PC-9 (cell line): ENCODE measurements at regions of chr12 and their contacts with region 1.

Region 1: GRCh38 chr12:49740930-49741881 is at the start of gene TMBIM6:
- DNase-seq: peak; percentile 98 to 99
- H3K4me3 ChIP-seq: peak within 1 kb of the TSS; percentile 96
- H3K27ac ChIP-seq: peak within 1 kb of the TSS; percentile 87
- H3K4me1 ChIP-seq: peaks cover 20% of the 10 kb centered on the region
- H3K27me3 ChIP-seq: no peaks in the 10 kb centered on the region
- CTCF ChIP-seq: peak; percentile 92
- total RNA-seq, gene TMBIM6: 685 and 690 TPM in 2 replicates

Region 2: GRCh38 chr12:49188914-49189367 is 552.3 kb before region 1 on chr12 and contains the start of gene TUBA1A:
- CTCF ChIA-PET with region 1: no interaction called
- POLR2A ChIA-PET with region 1: interaction called, 10 read pairs
- intact Hi-C with region 1: no loop called
- DNase-seq: peak; percentile 66 to 71
- H3K4me3 ChIP-seq: peak within 1 kb of the TSS; percentile 94
- H3K27ac ChIP-seq: no peak within 1 kb of the TSS
- H3K4me1 ChIP-seq: no peaks in the 10 kb centered on the region; the same call in 1 of the 2 replicates
- H3K27me3 ChIP-seq: peaks cover 6% of the 10 kb centered on the region; the same call in 1 of the 2 replicates
- CTCF ChIP-seq: no peak
- total RNA-seq, gene TUBA1A: 14.1 and 14.2 TPM in 2 replicates

Region 3: DNA sequence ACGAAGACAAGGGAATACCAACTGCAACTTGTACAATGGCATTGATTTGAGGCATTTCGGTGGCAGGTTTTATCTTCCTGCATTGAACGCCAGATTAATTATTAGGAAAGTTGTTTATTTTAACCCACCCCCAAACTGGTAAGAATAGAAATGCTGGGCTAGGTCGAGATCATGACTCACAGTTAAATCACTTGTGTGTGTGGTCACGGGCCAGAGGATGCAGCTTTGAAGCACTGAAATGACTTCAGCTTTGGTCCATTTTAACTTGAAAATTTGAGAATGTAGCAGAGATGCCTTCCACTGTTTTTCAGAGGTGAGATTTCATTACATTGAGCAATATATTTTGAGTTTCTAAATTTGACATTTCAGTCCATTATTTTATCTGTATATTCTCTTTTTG is 225.9 kb before region 1 on chr12:
- CTCF ChIA-PET with region 1: interaction called, 3 read pairs
- POLR2A ChIA-PET with region 1: interaction called, 11 read pairs
- intact Hi-C with region 1: no loop called
- DNase-seq: peak in 1 of 2 experiments; percentile 56
- H3K4me3 ChIP-seq: no peak overlapping the region
- H3K27ac ChIP-seq: no peak overlapping the region
- H3K4me1 ChIP-seq: peaks cover 11% of the 10 kb centered on the region
- H3K27me3 ChIP-seq: no peaks in the 10 kb centered on the region
- CTCF ChIP-seq: no peak

Region 4: DNA sequence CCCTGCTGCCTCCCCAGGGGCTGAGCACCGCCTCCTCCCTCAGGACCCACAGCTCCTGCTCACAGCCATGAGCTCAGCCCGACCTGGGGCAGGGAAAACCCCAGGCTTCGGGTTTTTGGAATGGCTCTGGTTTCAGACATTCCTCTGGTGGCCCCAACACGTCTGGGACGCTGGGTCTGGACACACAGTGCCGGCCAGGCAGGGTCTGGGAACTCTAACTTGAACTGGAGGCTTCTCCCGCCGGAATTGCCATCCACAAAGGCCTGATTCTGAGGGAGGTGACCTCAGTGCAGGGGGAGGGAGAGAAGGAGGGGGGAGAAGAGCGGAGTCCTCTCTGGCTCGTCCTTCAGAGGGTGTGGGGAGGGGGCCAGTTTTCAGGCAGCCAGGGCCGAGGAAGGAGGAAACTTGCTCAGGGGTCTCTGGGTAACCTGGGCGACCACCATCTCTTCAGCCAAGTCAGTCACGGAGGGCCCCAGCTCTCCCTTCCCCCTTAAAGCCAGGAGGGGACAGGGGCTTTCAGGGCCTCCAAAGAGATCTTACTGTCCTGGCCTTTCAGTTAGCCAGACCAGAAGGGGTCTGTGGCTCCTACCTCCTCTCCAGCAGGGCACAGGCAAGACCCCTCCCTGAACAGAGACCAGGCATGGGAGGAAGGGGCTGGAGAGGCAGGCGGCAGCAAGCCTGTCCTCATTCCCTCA is 67.6 kb after region 1 on chr12:
- CTCF ChIA-PET with region 1: no interaction called
- POLR2A ChIA-PET with region 1: interaction called, 10 read pairs
- intact Hi-C with region 1: no loop called
- DNase-seq: no peak
- H3K4me3 ChIP-seq: no peak overlapping the region
- H3K27ac ChIP-seq: no peak overlapping the region
- H3K4me1 ChIP-seq: no peaks in the 10 kb centered on the region
- H3K27me3 ChIP-seq: no peaks in the 10 kb centered on the region
- CTCF ChIP-seq: no peak

Region 5: DNA sequence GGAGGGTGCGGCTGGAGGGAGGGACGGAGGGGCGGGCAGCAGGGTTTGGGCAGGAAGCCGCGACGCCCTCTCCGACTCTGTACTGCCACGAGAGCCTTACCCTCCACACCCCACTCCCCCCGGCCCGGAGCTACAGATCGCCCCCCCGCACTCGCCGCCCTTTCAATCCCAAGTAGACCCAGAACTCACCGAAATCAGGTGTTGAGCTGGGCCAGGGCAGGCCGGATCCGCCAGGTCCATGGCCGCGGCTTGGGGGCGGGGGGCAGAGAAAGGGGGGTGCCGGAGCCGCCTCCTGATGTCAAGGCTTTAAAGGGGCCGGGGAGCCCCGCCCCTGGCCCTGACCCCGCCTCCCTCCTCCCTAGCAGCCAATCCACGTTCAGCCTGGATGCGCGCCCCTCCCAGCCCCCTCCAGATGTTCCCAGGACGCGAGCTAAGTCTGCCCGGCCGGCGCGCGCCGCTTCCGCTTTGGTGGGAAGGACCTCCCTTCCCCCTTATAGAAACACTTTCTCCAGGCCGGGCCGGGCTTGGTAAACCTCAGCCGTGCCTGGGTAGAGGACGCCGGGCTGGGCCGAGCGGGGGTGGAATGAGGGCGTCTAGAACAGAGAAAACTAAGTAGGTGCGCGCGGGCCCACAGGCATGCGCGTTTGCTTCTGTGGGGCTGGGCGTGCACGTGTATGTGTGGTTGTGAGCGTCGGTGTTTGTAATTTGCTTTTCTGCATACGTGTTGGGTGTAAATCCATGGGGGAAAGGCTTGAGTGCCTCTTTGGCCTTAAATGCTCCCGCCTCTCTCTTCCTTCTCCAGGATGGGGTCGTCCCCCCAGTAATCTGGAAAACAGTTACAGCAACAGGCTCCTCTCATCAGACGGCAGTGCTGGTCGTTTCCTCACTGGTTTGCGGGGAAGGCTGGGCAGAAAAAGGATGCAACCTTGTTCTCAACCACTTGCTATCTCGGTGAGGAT is 87.2 kb after region 1 on chr12 and contains the start of gene NCKAP5L:
- CTCF ChIA-PET with region 1: interaction called, 7 read pairs
- POLR2A ChIA-PET with region 1: interaction called, 14 read pairs
- intact Hi-C with region 1: no loop called
- DNase-seq: peak; percentile 82 to 94
- H3K4me3 ChIP-seq: peak within 1 kb of the TSS; percentile 84
- H3K27ac ChIP-seq: peak within 1 kb of the TSS; percentile 20; the same call in 1 of the 2 replicates
- H3K4me1 ChIP-seq: peaks cover 25% of the 10 kb centered on the region
- H3K27me3 ChIP-seq: no peaks in the 10 kb centered on the region
- CTCF ChIP-seq: no peak
- total RNA-seq, gene NCKAP5L: 20.5 and 20.9 TPM in 2 replicates

Region 6: DNA sequence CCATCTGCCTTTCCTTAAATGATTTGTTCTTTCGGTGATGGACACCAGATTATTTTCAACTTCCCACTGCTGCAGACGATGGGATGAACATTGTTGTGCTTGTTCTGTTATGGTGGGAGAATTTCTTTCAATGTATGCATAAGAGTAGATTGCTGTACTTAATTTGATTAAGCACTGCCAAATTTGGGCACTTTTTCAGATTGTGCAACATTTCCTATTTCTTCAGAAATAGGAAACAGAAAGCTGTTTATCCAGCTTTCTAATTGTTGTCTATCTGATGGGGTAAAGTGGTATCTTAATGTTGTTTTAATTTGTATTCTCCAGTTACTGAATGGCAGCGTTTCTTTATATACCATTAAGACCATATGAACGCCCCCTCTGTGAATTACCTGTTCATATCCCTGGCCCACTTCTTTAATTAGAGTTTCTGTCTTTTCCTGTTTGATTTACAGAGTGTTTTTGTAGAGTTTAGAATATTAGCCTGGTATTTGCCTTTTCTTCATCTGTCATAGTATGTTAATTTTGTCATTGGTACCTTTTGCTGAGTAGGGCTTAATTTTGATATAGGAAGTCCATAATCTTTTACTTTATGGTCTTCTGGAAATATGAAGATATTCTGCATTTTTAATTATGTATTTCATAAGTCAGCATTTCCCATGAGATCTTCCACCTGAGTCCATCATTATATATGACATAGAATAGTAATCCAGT is 823.2 kb after region 1 on chr12:
- CTCF ChIA-PET with region 1: no interaction called
- POLR2A ChIA-PET with region 1: interaction called, 10 read pairs
- intact Hi-C with region 1: no loop called
- DNase-seq: no peak
- H3K4me3 ChIP-seq: no peak overlapping the region
- H3K27ac ChIP-seq: peak overlapping the region; percentile 37; the same call in 1 of the 2 replicates
- H3K4me1 ChIP-seq: peaks cover 23% of the 10 kb centered on the region
- H3K27me3 ChIP-seq: no peaks in the 10 kb centered on the region
- CTCF ChIP-seq: no peak